ENCODE measurements at regions of chr17 and their contacts with region 1.

Region 1: DNA sequence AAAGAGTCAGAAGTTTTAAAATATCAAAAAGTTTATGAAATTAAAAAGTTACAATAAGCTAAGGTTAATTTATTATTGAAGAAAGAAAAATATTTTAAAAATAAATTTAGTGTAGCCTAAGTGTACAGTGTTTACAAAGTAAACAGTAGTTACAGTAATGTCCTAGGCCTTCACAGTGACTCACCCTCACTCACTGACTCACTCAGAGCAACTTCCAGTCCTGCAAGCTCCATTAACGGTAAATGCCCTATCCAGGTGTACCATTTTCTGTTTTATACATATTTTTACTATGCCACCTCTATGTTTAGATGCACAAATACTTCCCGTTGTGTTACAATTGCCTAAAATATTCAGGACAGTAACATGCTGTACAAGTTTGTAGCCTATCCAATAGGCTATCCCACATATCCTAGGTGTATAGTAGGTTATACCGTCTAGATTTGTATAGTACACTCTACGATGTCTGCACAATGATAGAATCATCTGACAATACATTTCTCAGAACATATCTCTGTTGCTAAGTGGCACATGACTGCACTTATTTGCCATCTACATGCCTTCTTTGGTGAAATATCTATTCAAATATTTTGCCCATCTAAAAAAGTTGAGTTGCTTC is 67.2 kb upstream of the WSB1 start:
- DNase-seq: no peak
- ATAC-seq: no peak
- H3K4me3 ChIP-seq: no peak overlapping the region
- H3K27ac ChIP-seq: no peak overlapping the region
- H3K4me1 ChIP-seq: no peaks in the 10 kb centered on the region
- H3K27me3 ChIP-seq: no peaks in the 10 kb centered on the region
- CTCF ChIP-seq: no peak
- EP300 ChIP-seq: no peak
- POLR2A ChIP-seq: no peak
- RAD21 ChIP-seq: no peak

Region 2: DNA sequence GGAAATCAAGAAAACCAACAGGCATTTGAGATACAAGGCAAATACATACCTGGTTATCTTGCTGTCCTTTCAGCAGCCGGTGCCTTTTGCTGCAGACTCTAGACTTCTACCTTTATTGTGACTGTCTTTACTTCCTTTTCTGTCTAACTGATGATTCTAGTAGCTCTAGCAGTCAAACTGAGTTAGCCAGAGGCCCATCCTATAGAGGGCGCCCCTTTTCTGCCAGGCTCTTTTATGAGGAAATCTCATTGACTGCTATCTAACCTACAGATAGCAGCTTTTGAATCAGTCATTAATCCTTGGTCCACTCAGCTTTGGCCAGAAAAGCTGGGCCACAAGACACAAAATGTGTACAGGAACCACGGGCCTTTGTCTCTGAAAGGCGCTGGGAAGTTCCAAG is 20.3 kb before region 1 on chr17:
- CTCF ChIA-PET with region 1: interaction called, 18 read pairs
- POLR2A ChIA-PET with region 1: no interaction called
- RAD21 ChIA-PET with region 1: no interaction called
- SMC1A ChIA-PET with region 1: no interaction called
- in situ Hi-C with region 1: no loop called
- intact Hi-C with region 1: no loop called
- DNase-seq: no peak
- ATAC-seq: peak; percentile 76
- H3K4me3 ChIP-seq: no peak overlapping the region
- H3K27ac ChIP-seq: no peak overlapping the region
- H3K4me1 ChIP-seq: no peaks in the 10 kb centered on the region
- H3K27me3 ChIP-seq: no peaks in the 10 kb centered on the region
- CTCF ChIP-seq: peak; percentile 9 to 55 (median 41); a peak in 4 of 6 replicates
- EP300 ChIP-seq: no peak
- POLR2A ChIP-seq: no peak
- RAD21 ChIP-seq: peak; percentile 19; the same call in 1 of the 2 replicates

Measured in GM12878 (cell line).